Activated CD8-positive, alpha-beta memory T cell treated with anti-CD3 and anti-CD28 coated beads, Interleukin-2, amount 10 ng/mL, durations not matched to agents 7 days and 5 days (primary cell): ENCODE measurements at regions of chr10 and their contacts with region 1.

Region 1: DNA sequence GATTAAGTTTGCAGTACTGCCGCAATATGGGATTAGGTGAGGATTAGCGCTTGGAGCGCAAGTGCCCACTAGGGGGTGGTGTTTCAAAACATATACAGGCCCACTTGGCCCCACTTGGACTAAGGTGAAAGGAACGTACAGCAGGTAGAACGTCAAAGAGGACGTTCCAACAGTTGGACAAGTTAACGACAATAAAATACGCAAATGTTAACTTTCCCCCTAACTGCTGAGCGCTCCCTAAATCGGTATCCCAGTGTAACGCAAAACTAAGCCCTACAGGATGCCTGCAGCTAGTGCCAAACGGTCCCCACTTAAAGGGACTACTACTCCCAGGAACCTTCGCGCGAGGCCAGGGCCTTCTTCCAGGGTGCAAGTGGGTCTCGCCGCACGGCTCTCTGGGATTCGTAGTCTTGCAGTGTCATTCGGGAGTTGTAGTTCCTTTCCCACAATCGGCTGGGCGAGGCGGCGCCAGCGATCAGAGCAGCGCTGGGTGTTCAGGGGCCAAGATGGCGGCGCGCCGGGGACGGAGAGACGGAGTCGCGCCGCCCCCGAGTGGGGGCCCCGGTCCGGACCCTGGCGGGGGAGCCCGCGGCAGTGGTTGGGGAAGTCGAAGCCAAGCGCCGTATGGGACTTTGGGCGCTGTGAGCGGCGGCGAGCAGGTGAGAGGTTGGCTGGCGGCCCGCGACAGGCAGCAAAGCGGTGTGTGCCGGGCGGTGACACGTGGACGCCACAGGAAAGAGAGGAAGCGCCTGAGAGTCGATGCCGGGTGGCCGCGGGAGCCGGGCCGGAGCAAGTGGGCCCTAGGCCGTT is at the start of gene PPRC1:
- DNase-seq: peak; percentile 99
- ATAC-seq: peak; percentile 94
- H3K4me3 Mint-ChIP-seq: peak within 1 kb of the TSS; percentile 93
- H3K27ac Mint-ChIP-seq: peak within 1 kb of the TSS; percentile 96
- H3K4me1 Mint-ChIP-seq: peaks cover 38% of the 10 kb centered on the region
- H3K27me3 Mint-ChIP-seq: no peaks in the 10 kb centered on the region
- total RNA-seq, gene PPRC1: 57.9 to 79.0 TPM

Region 2: DNA sequence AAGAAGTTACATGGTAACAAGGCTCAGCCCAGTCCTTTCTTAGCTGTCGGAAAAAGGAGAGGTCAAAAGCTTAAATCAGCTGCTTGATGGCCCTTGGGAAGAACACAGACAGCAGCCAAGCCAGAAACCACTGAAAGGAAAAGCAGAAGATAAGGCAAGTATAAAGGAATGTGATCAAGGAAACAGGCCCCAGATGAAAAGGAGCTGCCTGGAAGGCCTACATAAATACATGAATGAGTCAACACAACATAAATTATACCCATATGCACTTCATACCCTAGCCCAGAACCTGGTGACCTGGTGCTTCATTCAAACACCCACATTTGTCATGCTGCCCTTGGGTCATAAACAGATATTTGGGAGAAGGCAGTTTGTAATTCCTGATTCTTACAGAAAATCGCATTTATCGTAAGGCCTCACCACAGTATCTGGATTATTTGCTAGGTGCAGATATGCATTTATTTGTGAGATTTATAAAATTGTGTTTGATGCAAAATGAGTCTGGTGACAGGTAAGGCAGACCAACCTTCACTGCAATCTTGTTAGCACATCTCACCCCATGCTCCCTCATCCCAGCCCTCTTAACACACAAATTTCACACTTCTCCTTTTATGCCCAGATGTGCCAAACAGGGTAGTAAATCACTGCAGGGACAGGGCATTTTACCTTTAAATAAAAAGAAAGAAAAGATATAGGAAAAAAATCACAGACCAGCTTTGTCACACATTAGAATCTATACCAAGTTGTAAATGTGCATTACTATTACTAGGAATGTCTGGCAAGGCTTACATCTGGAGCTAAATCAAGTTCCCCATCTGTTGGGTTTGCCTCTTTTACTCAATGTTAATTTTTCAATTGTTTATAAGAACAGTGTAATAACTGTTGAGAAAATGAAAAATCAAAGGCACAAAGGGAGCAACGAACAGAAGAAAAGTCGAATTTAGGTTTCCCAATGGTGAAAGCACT is 194.2 kb before region 1 on chr10:
- CTCF ChIA-PET with region 1: no interaction called
- DNase-seq: no peak
- ATAC-seq: no peak
- H3K4me3 Mint-ChIP-seq: no peak overlapping the region
- H3K27ac Mint-ChIP-seq: no peak overlapping the region
- H3K4me1 Mint-ChIP-seq: peaks cover 5% of the 10 kb centered on the region
- H3K27me3 Mint-ChIP-seq: no peaks in the 10 kb centered on the region

Region 3: GRCh38 chr10:102114861-102115618 is 17.7 kb before region 1 on chr10:
- CTCF ChIA-PET with region 1: interaction called, 11 read pairs
- DNase-seq: peak; percentile 92
- ATAC-seq: peak; percentile 75
- H3K4me3 Mint-ChIP-seq: peak overlapping the region; percentile 91
- H3K27ac Mint-ChIP-seq: peak overlapping the region; percentile 91
- H3K4me1 Mint-ChIP-seq: peaks cover 61% of the 10 kb centered on the region
- H3K27me3 Mint-ChIP-seq: no peaks in the 10 kb centered on the region

Region 4: DNA sequence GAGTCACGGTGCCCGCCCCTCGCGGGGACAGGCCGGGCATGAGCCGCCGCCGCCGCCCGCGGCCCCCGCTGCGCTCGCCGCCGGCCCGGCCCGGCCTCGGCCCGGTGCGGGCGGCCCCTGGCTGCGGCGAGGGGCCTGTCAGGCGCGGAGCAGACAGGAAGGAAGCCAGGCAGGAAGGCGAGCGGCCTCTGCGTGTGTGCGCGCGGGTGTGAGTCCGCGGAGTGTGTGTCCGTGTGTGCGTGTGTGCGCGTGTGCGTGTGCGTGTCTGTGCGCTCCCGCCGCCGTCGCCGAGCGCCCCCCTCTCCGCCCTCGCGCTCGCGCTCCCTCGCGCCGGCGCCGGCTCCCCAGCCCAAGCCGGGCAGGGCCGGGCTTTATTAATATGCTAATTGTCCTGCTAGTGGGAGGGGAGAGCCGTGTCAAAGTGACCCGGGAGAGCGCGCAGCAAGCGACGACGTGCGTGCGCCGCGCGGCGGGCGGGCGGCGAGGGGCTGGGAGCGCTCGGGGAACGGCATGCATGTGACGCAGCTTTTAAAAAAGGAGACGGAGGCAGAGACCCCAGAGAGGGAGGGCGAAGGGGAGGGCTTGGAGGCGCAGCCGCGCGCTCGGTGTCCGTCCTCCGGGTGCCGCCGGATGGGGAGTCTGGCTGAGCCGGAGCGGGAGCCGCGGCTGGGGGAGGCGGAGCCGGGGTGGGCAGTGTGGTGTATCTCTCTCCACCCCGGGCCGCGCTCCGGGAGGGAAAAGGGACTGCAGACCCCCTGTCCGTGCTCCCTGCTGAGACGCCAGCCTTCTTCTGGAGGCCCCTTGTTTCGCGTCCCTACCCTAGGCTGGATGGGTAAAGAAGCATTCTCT is 12.4 kb before region 1 on chr10 and contains the start of gene LDB1:
- CTCF ChIA-PET with region 1: interaction called, 20 read pairs
- DNase-seq: peak; percentile 82
- ATAC-seq: peak; percentile 63
- H3K4me3 Mint-ChIP-seq: peak within 1 kb of the TSS; percentile 82
- H3K27ac Mint-ChIP-seq: peak within 1 kb of the TSS; percentile 91
- H3K4me1 Mint-ChIP-seq: peaks cover 46% of the 10 kb centered on the region
- H3K27me3 Mint-ChIP-seq: no peaks in the 10 kb centered on the region
- total RNA-seq, gene LDB1: 83.5 to 84.3 TPM

Region 5: DNA sequence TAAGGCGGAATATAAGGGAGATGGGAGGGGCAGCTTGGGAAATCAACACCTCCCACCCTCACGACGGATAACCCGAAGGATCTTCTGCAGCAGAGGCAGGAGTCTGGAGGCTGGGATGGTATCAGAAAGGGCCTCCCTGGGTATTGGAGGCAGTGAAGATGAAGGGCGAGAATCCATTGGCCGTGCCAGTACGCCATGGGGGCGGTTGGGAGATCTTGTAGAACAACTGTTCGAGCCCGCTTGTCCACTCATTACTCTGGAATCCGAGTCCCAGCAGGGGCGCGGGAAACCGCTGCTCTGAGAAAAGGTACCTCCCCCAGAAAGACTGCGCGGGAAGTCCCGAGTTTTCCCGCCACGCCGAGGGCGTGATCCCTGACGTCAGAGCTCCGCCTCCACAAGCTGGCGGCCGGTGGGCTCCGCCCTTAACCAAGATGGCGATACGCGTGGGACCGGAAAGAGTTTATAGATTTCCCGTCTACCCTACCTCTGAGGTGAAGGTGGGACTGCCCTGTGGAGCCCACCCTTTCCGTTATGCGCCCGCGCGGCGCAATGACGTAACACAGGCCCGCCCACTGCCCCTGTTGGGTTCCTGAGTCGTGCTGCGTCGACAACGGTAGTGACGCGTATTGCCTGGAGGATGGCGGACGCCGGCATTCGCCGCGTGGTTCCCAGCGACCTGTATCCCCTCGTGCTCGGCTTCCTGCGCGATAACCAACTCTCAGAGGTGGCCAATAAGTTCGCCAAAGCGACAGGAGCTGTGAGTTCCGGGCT is 19.2 kb after region 1 on chr10 and contains the start of gene NOLC1:
- CTCF ChIA-PET with region 1: interaction called, 23 read pairs
- DNase-seq: peak; percentile 100
- ATAC-seq: peak; percentile 96
- H3K4me3 Mint-ChIP-seq: peak within 1 kb of the TSS; percentile 96
- H3K27ac Mint-ChIP-seq: peak within 1 kb of the TSS; percentile 90
- H3K4me1 Mint-ChIP-seq: peaks cover 45% of the 10 kb centered on the region
- H3K27me3 Mint-ChIP-seq: no peaks in the 10 kb centered on the region
- total RNA-seq, gene NOLC1: 107 to 149 TPM

Region 6: GRCh38 chr10:102300278-102300843 is 167.6 kb after region 1 on chr10:
- CTCF ChIA-PET with region 1: no interaction called
- DNase-seq: no peak
- ATAC-seq: no peak
- H3K4me3 Mint-ChIP-seq: no peak overlapping the region
- H3K27ac Mint-ChIP-seq: peak overlapping the region; percentile 56
- H3K4me1 Mint-ChIP-seq: peaks cover 22% of the 10 kb centered on the region
- H3K27me3 Mint-ChIP-seq: no peaks in the 10 kb centered on the region